Sciatic nerve (tissue), 2 donors: ENCODE measurements at regions of chr3 and their contacts with region 1.

Region 1: GRCh38 chr3:78139166-78139565 is 1099.3 kb downstream of the ROBO2 start:
- DNase-seq: no peak
- ATAC-seq: no peak

Region 2: GRCh38 chr3:78221300-78221699 is 82.1 kb after region 1 on chr3:
- intact Hi-C with region 1: loop called (anchors 2 kb)
- DNase-seq: no peak
- ATAC-seq: no peak